ENCODE measurements at regions of chr4 and their contacts with region 1.

Region 1: GRCh38 chr4:119151161-119151560 is 15.5 kb downstream of the MYOZ2 start:
- DNase-seq: no peak
- H3K4me3 Mint-ChIP-seq: no peak overlapping the region
- H3K27ac Mint-ChIP-seq: no peak overlapping the region
- H3K4me1 Mint-ChIP-seq: no peaks in the 10 kb centered on the region
- H3K27me3 Mint-ChIP-seq: peaks cover 7% of the 10 kb centered on the region

Region 2: GRCh38 chr4:119050527-119051090 is 100.6 kb before region 1 on chr4:
- CTCF ChIA-PET with region 1: no interaction called
- POLR2A ChIA-PET with region 1: no interaction called
- DNase-seq: no peak
- H3K4me3 Mint-ChIP-seq: no peak overlapping the region
- H3K27ac Mint-ChIP-seq: no peak overlapping the region
- H3K4me1 Mint-ChIP-seq: no peaks in the 10 kb centered on the region
- H3K27me3 Mint-ChIP-seq: peaks cover 7% of the 10 kb centered on the region

Region 3: GRCh38 chr4:119162174-119162573 is 11.0 kb after region 1 on chr4:
- CTCF ChIA-PET with region 1: interaction called, 3 read pairs
- POLR2A ChIA-PET with region 1: interaction called, 13 read pairs
- DNase-seq: no peak
- H3K4me3 Mint-ChIP-seq: no peak overlapping the region
- H3K27ac Mint-ChIP-seq: no peak overlapping the region
- H3K4me1 Mint-ChIP-seq: no peaks in the 10 kb centered on the region
- H3K27me3 Mint-ChIP-seq: peaks cover 8% of the 10 kb centered on the region

Region 4: DNA sequence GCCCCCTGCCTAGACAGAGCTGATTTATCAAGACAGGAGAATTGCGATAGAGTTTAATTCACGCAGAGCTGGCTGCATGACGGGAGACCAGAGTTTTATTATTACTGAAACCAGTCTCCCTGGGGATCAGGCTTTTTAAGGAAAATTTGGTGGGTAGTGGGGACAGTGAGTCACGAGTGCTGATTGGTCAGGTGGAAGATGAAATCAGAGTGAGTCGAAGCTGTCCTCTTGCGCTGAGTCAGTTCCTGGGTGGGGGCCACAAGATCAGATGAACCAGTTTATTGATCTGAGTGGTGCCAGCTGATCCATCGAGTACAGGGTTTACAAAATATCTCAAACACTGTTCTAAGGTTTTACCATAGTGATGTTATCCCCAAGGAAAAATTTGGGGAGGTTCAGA is 21.1 kb after region 1 on chr4:
- CTCF ChIA-PET with region 1: no interaction called
- POLR2A ChIA-PET with region 1: no interaction called
- DNase-seq: no peak
- H3K4me3 Mint-ChIP-seq: no peak overlapping the region
- H3K27ac Mint-ChIP-seq: no peak overlapping the region
- H3K4me1 Mint-ChIP-seq: peaks cover 2% of the 10 kb centered on the region
- H3K27me3 Mint-ChIP-seq: no peaks in the 10 kb centered on the region